ENCODE measurements at regions of chr2 and their contacts with region 1.

Region 1: DNA sequence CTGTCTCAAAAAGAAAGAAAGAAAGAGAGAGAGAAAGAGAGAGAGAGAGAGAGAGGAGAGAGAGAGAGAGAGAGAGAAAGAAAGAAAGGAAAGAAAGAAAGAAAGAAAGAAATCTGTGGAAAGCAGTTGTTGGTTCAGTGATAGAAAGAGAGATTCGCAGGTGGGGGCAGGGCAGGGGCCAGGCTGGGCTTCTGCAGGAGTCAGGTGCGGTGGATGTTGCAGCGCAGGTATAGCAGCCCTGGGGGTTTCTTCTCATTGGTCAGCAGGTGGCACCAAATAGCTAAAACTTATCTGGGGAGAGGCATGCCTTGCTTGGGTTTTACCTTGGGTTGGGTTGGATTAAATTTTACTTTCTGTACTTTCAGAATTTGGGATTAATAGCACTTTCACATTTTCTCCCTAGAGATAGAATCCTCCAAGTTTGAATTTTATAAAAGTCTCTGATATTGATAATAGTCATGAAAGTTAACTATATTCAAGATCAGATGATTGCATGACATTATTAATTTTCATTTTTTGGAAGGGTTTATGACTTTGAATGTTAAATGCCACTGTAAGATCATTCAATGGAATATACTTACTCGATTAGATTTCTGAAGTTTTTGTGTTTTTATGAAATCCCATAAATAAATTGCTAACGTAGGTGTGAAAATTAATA is 66.6 kb downstream of the SPTBN1 start:
- DNase-seq: peak; percentile 49
- H3K4me3 Mint-ChIP-seq: no peak overlapping the region
- H3K27ac Mint-ChIP-seq: no peak overlapping the region
- H3K4me1 Mint-ChIP-seq: peaks cover 26% of the 10 kb centered on the region
- H3K27me3 Mint-ChIP-seq: peaks cover 24% of the 10 kb centered on the region

Region 2: DNA sequence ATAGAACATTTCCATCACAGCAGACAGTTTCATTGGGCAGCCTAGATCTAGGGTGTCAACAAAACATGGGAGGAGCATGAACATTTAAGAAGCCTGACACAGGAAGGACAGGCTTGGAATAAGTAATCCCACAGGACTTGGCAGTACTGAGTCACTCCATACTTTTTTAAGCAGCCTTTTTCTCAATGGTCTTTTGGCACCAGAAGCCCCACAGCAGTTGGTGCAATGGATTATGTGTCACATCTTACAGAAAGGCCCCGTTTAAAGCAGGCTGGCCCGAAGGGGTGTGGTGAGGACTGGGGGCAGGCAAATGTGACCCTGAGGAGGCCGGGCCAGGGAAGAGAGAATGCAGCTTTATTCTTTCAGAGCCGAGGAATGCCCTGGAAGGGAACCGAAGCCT is 40.0 kb before region 1 on chr2:
- intact Hi-C with region 1: no loop called
- DNase-seq: no peak
- H3K4me3 Mint-ChIP-seq: no peak overlapping the region
- H3K27ac Mint-ChIP-seq: no peak overlapping the region
- H3K4me1 Mint-ChIP-seq: no peaks in the 10 kb centered on the region
- H3K27me3 Mint-ChIP-seq: peaks cover 12% of the 10 kb centered on the region

Region 3: DNA sequence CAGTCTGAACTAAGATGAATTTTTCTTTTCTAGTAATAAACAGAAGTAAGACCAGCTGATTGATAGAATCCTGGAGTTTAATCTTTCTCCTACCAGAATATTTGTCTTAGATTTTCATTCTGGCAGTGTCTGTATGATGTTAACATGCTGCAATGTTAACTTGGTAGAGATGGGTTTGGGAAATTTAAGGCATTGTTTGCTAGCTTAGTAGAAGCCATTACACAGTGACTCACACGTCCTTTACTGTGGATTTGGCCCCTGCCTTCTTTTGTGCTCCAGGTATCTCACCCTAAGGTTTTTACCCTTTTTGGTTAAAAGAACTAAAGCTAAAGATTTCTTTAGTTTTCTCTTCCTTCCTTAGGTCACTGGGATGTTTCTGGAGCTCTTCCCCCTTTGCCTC is 17.4 kb after region 1 on chr2:
- intact Hi-C with region 1: loop called (anchors 2 kb)
- DNase-seq: no peak
- H3K4me3 Mint-ChIP-seq: no peak overlapping the region
- H3K27ac Mint-ChIP-seq: no peak overlapping the region
- H3K4me1 Mint-ChIP-seq: peaks cover 5% of the 10 kb centered on the region
- H3K27me3 Mint-ChIP-seq: peaks cover 9% of the 10 kb centered on the region

Region 4: GRCh38 chr2:54634564-54635511 is 112.1 kb after region 1 on chr2:
- intact Hi-C with region 1: loop called (anchors 5 kb)
- DNase-seq: no peak
- H3K4me3 Mint-ChIP-seq: peak overlapping the region; percentile 54
- H3K27ac Mint-ChIP-seq: peak overlapping the region; percentile 52
- H3K4me1 Mint-ChIP-seq: peaks cover 47% of the 10 kb centered on the region
- H3K27me3 Mint-ChIP-seq: no peaks in the 10 kb centered on the region

Region 5: GRCh38 chr2:54704688-54705605 is 182.2 kb after region 1 on chr2:
- intact Hi-C with region 1: loop called (anchors 1 kb)
- DNase-seq: no peak
- H3K4me3 Mint-ChIP-seq: no peak overlapping the region
- H3K27ac Mint-ChIP-seq: no peak overlapping the region
- H3K4me1 Mint-ChIP-seq: peaks cover 8% of the 10 kb centered on the region
- H3K27me3 Mint-ChIP-seq: peaks cover 53% of the 10 kb centered on the region

Region 6: DNA sequence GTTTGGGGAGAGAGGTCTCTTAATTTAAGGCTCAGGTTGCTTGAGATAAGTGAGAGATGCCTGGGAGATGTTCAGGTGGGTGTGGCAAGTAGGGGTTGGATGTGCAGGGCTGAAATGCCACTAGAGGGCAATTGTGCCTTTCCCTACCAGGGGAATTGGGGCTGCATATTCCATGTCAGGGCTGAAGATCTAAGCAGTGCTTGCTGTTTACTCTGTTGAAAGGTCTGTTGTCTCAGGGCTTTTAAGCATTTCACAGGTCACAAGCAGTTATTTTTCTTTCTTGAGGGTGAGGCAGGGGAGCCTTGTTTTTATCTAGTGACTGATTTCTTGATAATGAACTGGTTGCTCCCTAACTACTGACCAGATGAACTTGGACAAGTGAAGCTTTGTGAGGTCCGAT is 1668.9 kb after region 1 on chr2:
- intact Hi-C with region 1: no loop called
- DNase-seq: no peak
- H3K4me3 Mint-ChIP-seq: no peak overlapping the region
- H3K27ac Mint-ChIP-seq: no peak overlapping the region
- H3K4me1 Mint-ChIP-seq: no peaks in the 10 kb centered on the region
- H3K27me3 Mint-ChIP-seq: peaks cover 10% of the 10 kb centered on the region